Naive thymus-derived CD4-positive, alpha-beta T cell (primary cell): ENCODE measurements at regions of chr21 and their contacts with region 1.

Region 1: GRCh38 chr21:17780539-17780938 is 38.6 kb downstream of the C21orf91 start:
- DNase-seq: peak in 5 of 9 donors; percentile 36 to 64 (median 38)
- ATAC-seq: peak; percentile 64
- H3K4me3 ChIP-seq: peak overlapping the region; percentile 0
- H3K4me3 Mint-ChIP-seq: peak overlapping the region; percentile 26 to 87 (median 66)
- H3K27ac ChIP-seq: peak overlapping the region; percentile 25
- H3K27ac Mint-ChIP-seq: peak overlapping the region; percentile 42 to 96 (median 90)
- H3K4me1 ChIP-seq: peaks cover 62 to 71% of the 10 kb centered on the region in 2 donors
- H3K4me1 Mint-ChIP-seq: peaks cover 58 to 84% (median 74%) of the 10 kb centered on the region in 7 donors
- H3K27me3 ChIP-seq: no peaks in the 10 kb centered on the region
- H3K27me3 Mint-ChIP-seq: no peaks in the 10 kb centered on the region

Region 2: GRCh38 chr21:17611414-17612022 is 169.0 kb before region 1 on chr21:
- CTCF ChIA-PET with region 1: no interaction called
- POLR2A ChIA-PET with region 1: no interaction called
- intact Hi-C with region 1: loop called (anchors 1 kb)
- DNase-seq: peak; percentile 57 to 84 (median 73)
- ATAC-seq: peak; percentile 72
- H3K4me3 ChIP-seq: peak overlapping the region; percentile 83
- H3K4me3 Mint-ChIP-seq: peak overlapping the region; percentile 85 to 98 (median 90)
- H3K27ac ChIP-seq: peak overlapping the region; percentile 72
- H3K27ac Mint-ChIP-seq: peak overlapping the region; percentile 77 to 100 (median 93)
- H3K4me1 ChIP-seq: peaks cover 0 to 7% of the 10 kb centered on the region in 2 donors
- H3K4me1 Mint-ChIP-seq: peaks cover 7 to 65% (median 19%) of the 10 kb centered on the region in 7 donors
- H3K27me3 ChIP-seq: no peaks in the 10 kb centered on the region
- H3K27me3 Mint-ChIP-seq: no peaks in the 10 kb centered on the region

Region 3: GRCh38 chr21:17688912-17689874 is 91.3 kb before region 1 on chr21:
- CTCF ChIA-PET with region 1: interaction called, 7 read pairs
- POLR2A ChIA-PET with region 1: no interaction called
- intact Hi-C with region 1: loop called in 1 of 2 experiments (anchors 5 kb)
- DNase-seq: peak; percentile 11 to 47 (median 37)
- ATAC-seq: no peak
- H3K4me3 ChIP-seq: no peak overlapping the region
- H3K4me3 Mint-ChIP-seq: peak overlapping the region in 2 of 10 donors; percentile 10 to 33
- H3K27ac ChIP-seq: no peak overlapping the region
- H3K27ac Mint-ChIP-seq: peak overlapping the region in 2 of 9 donors; percentile 38 to 40
- H3K4me1 ChIP-seq: peaks cover 0 to 6% of the 10 kb centered on the region in 2 donors
- H3K4me1 Mint-ChIP-seq: peaks cover 14 to 42% (median 36%) of the 10 kb centered on the region in 7 donors
- H3K27me3 ChIP-seq: no peaks in the 10 kb centered on the region
- H3K27me3 Mint-ChIP-seq: peaks cover 0 to 2% (median 0%) of the 10 kb centered on the region in 5 donors

Region 4: DNA sequence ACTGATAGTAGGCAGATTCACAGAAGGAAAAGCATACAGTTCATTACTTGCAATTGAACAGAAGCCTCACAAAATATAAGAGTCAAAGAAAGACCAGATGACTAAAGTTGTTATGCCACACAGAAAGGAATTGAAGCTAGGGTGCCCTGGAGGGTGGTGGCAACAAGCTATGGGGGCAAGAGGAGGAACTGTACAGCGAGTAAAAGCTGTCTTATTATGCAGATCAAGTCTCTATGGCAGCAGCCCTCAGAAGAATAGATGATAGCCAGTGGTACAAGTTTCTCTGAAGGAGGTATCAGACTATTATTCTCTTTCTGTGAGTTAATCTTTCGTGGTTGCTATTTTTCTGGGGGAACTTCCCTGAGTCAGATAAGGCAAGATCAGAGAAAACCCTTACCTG is 33.6 kb before region 1 on chr21:
- CTCF ChIA-PET with region 1: interaction called, 3 read pairs
- POLR2A ChIA-PET with region 1: interaction called, 3 read pairs
- intact Hi-C with region 1: loop called in 1 of 2 experiments (anchors 5 kb)
- DNase-seq: no peak
- ATAC-seq: no peak
- H3K4me3 ChIP-seq: no peak overlapping the region
- H3K4me3 Mint-ChIP-seq: no peak overlapping the region
- H3K27ac ChIP-seq: no peak overlapping the region
- H3K27ac Mint-ChIP-seq: peak overlapping the region in 1 of 9 donors; percentile 52
- H3K4me1 ChIP-seq: no peaks in the 10 kb centered on the region
- H3K4me1 Mint-ChIP-seq: peaks cover 0 to 11% (median 0%) of the 10 kb centered on the region in 7 donors
- H3K27me3 ChIP-seq: no peaks in the 10 kb centered on the region
- H3K27me3 Mint-ChIP-seq: peaks cover 0 to 4% (median 0%) of the 10 kb centered on the region in 5 donors

Region 5: DNA sequence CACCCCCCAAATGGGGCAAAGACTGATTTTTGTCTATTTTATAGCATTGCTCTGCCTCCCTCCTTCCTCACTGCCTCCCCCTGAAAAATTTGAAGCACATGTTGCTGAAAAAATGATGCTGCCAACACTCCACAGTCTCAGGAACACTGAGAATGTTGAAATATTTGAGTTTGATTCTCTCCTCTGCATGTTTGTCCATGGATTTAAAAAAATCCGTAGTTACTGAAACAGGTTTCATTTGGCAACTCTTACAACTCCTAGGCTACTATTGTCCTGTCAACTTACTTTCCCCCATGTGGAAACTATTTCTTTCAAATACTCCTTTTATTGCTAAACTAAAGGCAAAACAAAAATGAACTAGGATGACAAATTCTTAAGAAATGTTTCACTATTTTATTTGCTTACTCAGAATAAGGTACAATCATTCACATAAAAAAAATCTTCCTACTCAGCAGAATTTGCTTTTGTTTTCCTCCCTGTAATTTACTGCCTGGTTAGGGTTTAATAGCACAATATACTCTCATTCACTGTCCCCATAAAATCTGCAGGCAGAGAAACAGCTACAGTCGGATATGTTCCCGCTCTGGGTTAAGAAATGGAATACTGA is 11.6 kb before region 1 on chr21:
- CTCF ChIA-PET with region 1: no interaction called
- POLR2A ChIA-PET with region 1: interaction called, 7 read pairs
- intact Hi-C with region 1: loop called (anchors 1 kb)
- DNase-seq: no peak
- ATAC-seq: no peak
- H3K4me3 ChIP-seq: no peak overlapping the region
- H3K4me3 Mint-ChIP-seq: no peak overlapping the region
- H3K27ac ChIP-seq: no peak overlapping the region
- H3K27ac Mint-ChIP-seq: peak overlapping the region in 1 of 9 donors; percentile 14
- H3K4me1 ChIP-seq: no peaks in the 10 kb centered on the region
- H3K4me1 Mint-ChIP-seq: peaks cover 0 to 9% (median 0%) of the 10 kb centered on the region in 7 donors
- H3K27me3 ChIP-seq: no peaks in the 10 kb centered on the region
- H3K27me3 Mint-ChIP-seq: peaks cover 0 to 9% (median 0%) of the 10 kb centered on the region in 5 donors

Region 6: GRCh38 chr21:17798796-17799195 is 18.3 kb after region 1 on chr21:
- CTCF ChIA-PET with region 1: interaction called, 8 read pairs
- POLR2A ChIA-PET with region 1: interaction called, 71 read pairs
- intact Hi-C with region 1: loop called (anchors 1 kb)
- DNase-seq: no peak
- ATAC-seq: no peak
- H3K4me3 ChIP-seq: no peak overlapping the region
- H3K4me3 Mint-ChIP-seq: peak overlapping the region in 1 of 10 donors; percentile 34
- H3K27ac ChIP-seq: peak overlapping the region; percentile 21
- H3K27ac Mint-ChIP-seq: peak overlapping the region in 7 of 9 donors; percentile 12 to 86 (median 61)
- H3K4me1 ChIP-seq: peaks cover 36 to 39% of the 10 kb centered on the region in 2 donors
- H3K4me1 Mint-ChIP-seq: peaks cover 24 to 78% (median 60%) of the 10 kb centered on the region in 7 donors
- H3K27me3 ChIP-seq: no peaks in the 10 kb centered on the region
- H3K27me3 Mint-ChIP-seq: no peaks in the 10 kb centered on the region

Region 7: DNA sequence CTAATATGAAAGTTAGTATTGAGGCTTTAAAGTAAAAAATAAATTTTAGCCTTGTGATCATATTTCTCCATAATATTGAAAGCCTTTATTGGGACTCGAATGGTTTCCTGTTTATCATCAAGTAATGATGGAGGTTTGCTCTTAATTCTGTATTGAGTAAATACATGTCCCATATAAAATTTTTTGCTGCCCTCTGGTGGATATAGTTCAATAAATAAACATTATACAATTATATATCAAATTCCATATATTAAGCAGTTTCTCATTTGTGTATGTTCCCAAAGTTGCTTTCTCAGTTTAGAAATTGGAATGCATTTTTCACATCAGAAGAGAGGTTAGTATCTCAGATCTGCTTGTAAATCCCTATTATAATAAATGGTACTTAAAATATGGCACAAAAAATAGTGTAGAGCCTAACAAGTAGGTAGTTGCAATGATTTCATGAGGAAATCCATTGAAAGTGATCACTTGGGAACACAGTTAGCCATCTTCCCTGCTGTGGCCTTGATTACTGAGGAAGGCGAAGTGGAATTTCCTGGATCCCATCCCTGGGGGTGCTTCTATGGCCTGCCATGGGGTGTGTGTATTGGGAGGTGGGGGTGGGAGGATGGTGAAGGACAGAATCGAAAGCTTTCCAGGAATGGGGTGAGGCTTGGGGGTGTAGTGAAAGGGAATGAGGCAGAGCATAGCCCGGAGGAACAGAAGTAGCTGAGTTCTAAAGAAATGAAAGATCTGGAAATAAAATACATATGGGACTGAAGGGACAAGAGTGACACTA is 122.7 kb after region 1 on chr21:
- CTCF ChIA-PET with region 1: no interaction called
- POLR2A ChIA-PET with region 1: no interaction called
- intact Hi-C with region 1: loop called (anchors 2 to 5 kb)
- DNase-seq: peak in 7 of 9 donors; percentile 10 to 58 (median 37)
- ATAC-seq: peak; percentile 79
- H3K4me3 ChIP-seq: no peak overlapping the region
- H3K4me3 Mint-ChIP-seq: no peak overlapping the region
- H3K27ac ChIP-seq: no peak overlapping the region
- H3K27ac Mint-ChIP-seq: no peak overlapping the region
- H3K4me1 ChIP-seq: no peaks in the 10 kb centered on the region
- H3K4me1 Mint-ChIP-seq: peaks cover 0 to 12% (median 3%) of the 10 kb centered on the region in 7 donors
- H3K27me3 ChIP-seq: no peaks in the 10 kb centered on the region
- H3K27me3 Mint-ChIP-seq: peaks cover 0 to 5% (median 0%) of the 10 kb centered on the region in 5 donors